A549 (cell line): ENCODE measurements at regions of chr10 and their contacts with region 1.

Region 1: GRCh38 chr10:99430451-99431189 is at the start of gene GOT1:
- DNase-seq: peak; percentile 99
- ATAC-seq: peak; percentile 98 to 99
- H3K4me3 ChIP-seq: peak within 1 kb of the TSS; percentile 88
- H3K27ac ChIP-seq: peak within 1 kb of the TSS; percentile 85 to 95
- H3K4me1 ChIP-seq: peaks cover 18% of the 10 kb centered on the region; the same call in 2 of the 3 replicates
- CTCF ChIP-seq: no peak
- EP300 ChIP-seq: no peak
- POLR2A ChIP-seq: peak; percentile 65
- RAD21 ChIP-seq: no peak
- polyA plus RNA-seq, gene GOT1: 34.9 and 55.7 TPM in 2 replicates

Region 2: DNA sequence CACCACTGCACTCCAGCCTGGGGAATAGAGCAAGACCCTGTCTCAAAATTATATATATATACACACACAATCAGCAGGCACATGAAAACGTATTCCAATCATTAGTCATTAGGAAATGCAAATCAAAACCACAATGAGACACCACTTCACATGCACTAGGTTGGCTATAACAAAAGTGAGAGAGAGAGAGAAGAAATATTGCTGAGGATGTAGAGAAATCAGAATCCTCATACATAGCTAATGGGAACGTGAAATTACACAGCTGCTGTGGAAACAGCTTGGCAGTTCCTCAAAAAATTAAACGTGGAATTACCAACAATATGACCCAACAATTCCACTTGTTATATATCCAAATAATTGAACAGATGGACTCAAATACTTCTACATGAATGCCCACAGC is 144.7 kb before region 1 on chr10:
- CTCF ChIA-PET with region 1: no interaction called
- POLR2A ChIA-PET with region 1: no interaction called
- DNase-seq: no peak
- ATAC-seq: no peak
- H3K4me3 ChIP-seq: no peak overlapping the region
- H3K27ac ChIP-seq: no peak overlapping the region
- H3K4me1 ChIP-seq: no peaks in the 10 kb centered on the region
- CTCF ChIP-seq: no peak
- EP300 ChIP-seq: no peak
- POLR2A ChIP-seq: no peak
- RAD21 ChIP-seq: no peak

Region 3: DNA sequence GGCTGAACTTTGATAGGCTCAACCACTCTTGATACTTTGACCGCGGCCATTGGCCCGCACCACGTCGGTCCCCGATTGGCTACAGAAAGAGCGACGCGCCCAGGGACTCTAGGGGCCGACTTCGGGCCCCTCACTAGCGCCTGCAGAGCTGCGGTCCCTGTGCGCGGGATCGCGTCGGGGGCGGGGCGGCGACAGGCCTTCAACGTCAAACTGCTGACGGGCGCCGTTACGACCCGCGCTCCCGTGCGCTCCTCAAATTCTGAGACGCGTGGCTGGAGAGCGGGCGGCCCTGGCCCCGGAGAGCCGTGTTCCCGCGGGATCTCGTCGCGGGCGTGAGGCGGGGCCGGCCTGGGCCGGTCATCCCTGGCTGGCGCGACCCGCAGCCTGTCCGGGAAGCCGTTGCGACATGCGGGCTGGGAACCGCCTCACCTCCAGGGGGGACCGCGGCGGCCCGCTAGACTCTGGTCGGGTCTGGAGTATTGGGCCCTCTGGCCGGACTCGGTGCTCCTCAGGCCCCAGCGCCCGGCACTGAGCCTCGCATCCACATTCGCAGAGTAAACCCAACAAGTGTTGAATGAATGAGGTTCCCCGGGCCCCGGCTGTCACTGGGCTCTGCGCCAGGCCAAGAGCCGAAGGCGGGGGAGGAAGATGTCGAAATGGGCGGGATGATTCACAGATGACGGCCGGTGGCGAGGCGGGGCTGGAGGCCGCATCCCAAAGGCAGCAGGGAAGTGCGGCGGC is 190.3 kb after region 1 on chr10:
- CTCF ChIA-PET with region 1: interaction called, 260 read pairs
- POLR2A ChIA-PET with region 1: interaction called, 27 read pairs
- DNase-seq: peak; percentile 84 to 96
- ATAC-seq: peak; percentile 89 to 96
- H3K4me3 ChIP-seq: peak overlapping the region; percentile 55
- H3K27ac ChIP-seq: peak overlapping the region; percentile 95
- H3K4me1 ChIP-seq: peaks cover 27% of the 10 kb centered on the region
- CTCF ChIP-seq: no peak
- EP300 ChIP-seq: no peak
- POLR2A ChIP-seq: peak; percentile 85
- RAD21 ChIP-seq: no peak; a peak in 1 of 5 replicates